Mammary epithelial cell (primary cell): ENCODE measurements at regions of chr12 and their contacts with region 1.

Region 1: DNA sequence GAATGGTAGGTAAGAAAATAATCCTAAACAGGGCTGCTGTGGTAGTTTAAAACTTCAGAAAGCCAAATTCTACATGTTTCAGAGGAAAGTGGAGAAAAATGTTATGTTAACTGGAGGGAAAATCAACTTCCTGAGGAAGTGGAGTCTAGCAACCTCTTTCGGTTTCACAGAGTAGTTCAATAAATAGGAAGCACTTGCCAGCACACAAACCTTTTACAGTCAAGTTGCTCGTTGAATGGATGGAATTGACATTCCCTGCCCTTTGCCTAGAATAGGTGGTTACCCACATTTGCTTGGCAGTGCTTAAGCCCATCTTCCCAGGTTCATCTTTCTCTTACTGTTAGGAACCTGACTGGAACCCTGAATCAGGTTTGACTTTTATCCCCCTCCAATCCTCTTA is 15.9 kb downstream of the ANKRD13A start:
- DNase-seq: no peak
- H3K4me3 ChIP-seq: no peak overlapping the region
- H3K27ac ChIP-seq: no peak overlapping the region
- H3K4me1 ChIP-seq: no peaks in the 10 kb centered on the region
- H3K27me3 ChIP-seq: no peaks in the 10 kb centered on the region
- CTCF ChIP-seq: no peak

Region 2: DNA sequence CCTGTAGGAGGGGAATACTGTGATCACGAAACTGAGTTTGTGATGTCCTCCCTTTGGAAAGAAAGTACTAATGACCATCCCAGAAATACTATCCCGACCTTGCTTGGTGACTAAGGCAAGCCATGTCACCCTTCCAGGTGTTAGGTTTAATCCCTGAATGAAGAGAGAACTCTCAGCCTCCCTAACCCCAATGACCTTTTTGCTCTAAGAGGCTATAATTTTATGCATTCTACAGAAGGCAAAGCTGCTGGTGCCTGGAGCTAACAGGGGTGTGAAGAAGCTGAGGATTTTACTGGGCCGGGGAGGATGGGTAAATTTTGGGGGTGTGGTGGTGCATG is 41.0 kb after region 1 on chr12:
- CTCF ChIA-PET with region 1: no interaction called
- dilution Hi-C with region 1: loop called (anchors 5 kb)
- in situ Hi-C with region 1: no loop called
- intact Hi-C with region 1: no loop called
- DNase-seq: no peak
- H3K4me3 ChIP-seq: no peak overlapping the region
- H3K27ac ChIP-seq: peak overlapping the region; percentile 5
- H3K4me1 ChIP-seq: peaks cover 10% of the 10 kb centered on the region
- H3K27me3 ChIP-seq: no peaks in the 10 kb centered on the region
- CTCF ChIP-seq: no peak

Region 3: DNA sequence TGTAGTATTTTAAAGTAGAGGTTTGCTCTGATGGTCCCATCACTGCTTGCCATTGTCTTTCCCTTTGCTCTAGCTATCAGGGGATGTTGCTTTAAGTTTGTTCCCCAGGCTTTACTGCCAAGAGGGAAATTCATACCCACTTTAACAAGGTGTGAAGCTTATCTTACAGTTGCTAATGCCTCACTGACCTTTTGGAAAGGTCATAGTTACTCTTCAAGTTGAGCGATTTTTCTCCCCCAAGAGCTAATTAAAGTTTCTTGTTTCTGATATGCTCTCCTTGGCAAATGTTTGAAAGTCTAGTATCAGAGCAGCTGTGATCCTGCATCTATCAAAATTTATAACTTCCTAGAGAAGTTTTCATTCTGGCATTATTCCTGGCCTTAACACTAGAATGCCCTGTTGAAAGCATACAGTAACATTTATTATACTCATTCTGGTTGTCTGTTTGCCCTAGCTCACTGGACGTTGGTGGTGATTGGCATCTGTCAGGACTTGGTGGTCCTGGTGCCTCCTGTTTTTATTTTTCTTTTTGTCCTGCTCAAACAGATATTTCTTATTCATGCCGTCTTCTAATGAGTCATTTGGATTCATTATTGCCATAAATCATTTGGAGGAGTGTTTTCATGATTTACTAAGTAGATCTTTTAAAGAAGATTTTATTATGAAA is 274.0 kb after region 1 on chr12:
- CTCF ChIA-PET with region 1: no interaction called
- dilution Hi-C with region 1: no loop called
- in situ Hi-C with region 1: no loop called
- intact Hi-C with region 1: no loop called
- DNase-seq: no peak
- H3K4me3 ChIP-seq: no peak overlapping the region
- H3K27ac ChIP-seq: peak overlapping the region; percentile 30
- H3K4me1 ChIP-seq: peaks cover 39% of the 10 kb centered on the region
- H3K27me3 ChIP-seq: no peaks in the 10 kb centered on the region
- CTCF ChIP-seq: no peak